ENCODE measurements at regions of chr5 and their contacts with region 1.

Region 1: GRCh38 chr5:136103118-136103517 is 29.5 kb upstream of the SMAD5 start:
- DNase-seq: no peak
- H3K4me3 ChIP-seq: no peak overlapping the region
- H3K4me3 Mint-ChIP-seq: no peak overlapping the region
- H3K27ac Mint-ChIP-seq: peak overlapping the region; percentile 87
- H3K4me1 ChIP-seq: peaks cover 96% of the 10 kb centered on the region
- H3K4me1 Mint-ChIP-seq: peaks cover 54% of the 10 kb centered on the region
- H3K27me3 ChIP-seq: no peaks in the 10 kb centered on the region
- H3K27me3 Mint-ChIP-seq: no peaks in the 10 kb centered on the region
- CTCF ChIP-seq: no peak

Region 2: DNA sequence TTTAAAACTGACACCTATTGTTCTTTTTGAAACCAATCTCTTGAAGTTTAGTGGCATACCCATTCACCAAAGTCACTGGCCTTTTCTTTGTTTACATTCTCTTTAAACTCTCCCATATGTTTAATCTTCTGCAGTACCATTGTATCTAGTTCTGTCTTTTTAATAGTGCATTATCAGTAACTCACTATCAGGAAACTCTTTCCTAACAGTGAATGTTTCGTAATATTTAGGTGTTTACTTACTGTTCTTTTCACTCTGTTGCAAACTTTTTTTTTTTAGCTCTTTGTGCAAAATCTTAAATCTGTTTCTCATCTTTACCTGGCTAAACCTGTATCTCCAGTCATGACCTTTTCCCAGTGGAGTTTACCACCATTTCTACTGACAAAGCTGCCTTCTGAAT is 46.8 kb after region 1 on chr5:
- CTCF ChIA-PET with region 1: no interaction called
- POLR2A ChIA-PET with region 1: interaction called, 3 read pairs
- intact Hi-C with region 1: loop called (anchors 5 kb)
- DNase-seq: peak in 1 of 2 experiments; percentile 60
- H3K4me3 ChIP-seq: no peak overlapping the region
- H3K4me3 Mint-ChIP-seq: peak overlapping the region; percentile 50
- H3K27ac Mint-ChIP-seq: peak overlapping the region; percentile 45
- H3K4me1 ChIP-seq: peaks cover 62% of the 10 kb centered on the region
- H3K4me1 Mint-ChIP-seq: peaks cover 48% of the 10 kb centered on the region
- H3K27me3 ChIP-seq: no peaks in the 10 kb centered on the region
- H3K27me3 Mint-ChIP-seq: no peaks in the 10 kb centered on the region
- CTCF ChIP-seq: no peak

Region 3: GRCh38 chr5:136457390-136458013 is 354.4 kb after region 1 on chr5:
- CTCF ChIA-PET with region 1: no interaction called
- POLR2A ChIA-PET with region 1: no interaction called
- intact Hi-C with region 1: no loop called
- DNase-seq: no peak
- H3K4me3 ChIP-seq: no peak overlapping the region
- H3K4me3 Mint-ChIP-seq: no peak overlapping the region
- H3K27ac Mint-ChIP-seq: no peak overlapping the region
- H3K4me1 ChIP-seq: no peaks in the 10 kb centered on the region
- H3K4me1 Mint-ChIP-seq: no peaks in the 10 kb centered on the region
- H3K27me3 ChIP-seq: no peaks in the 10 kb centered on the region
- H3K27me3 Mint-ChIP-seq: peaks cover 3% of the 10 kb centered on the region
- CTCF ChIP-seq: no peak

Measured in Caco-2 (cell line).